Sigmoid colon (tissue), 7 donors: ENCODE measurements at regions of chr2 and their contacts with region 1.

Region 1: DNA sequence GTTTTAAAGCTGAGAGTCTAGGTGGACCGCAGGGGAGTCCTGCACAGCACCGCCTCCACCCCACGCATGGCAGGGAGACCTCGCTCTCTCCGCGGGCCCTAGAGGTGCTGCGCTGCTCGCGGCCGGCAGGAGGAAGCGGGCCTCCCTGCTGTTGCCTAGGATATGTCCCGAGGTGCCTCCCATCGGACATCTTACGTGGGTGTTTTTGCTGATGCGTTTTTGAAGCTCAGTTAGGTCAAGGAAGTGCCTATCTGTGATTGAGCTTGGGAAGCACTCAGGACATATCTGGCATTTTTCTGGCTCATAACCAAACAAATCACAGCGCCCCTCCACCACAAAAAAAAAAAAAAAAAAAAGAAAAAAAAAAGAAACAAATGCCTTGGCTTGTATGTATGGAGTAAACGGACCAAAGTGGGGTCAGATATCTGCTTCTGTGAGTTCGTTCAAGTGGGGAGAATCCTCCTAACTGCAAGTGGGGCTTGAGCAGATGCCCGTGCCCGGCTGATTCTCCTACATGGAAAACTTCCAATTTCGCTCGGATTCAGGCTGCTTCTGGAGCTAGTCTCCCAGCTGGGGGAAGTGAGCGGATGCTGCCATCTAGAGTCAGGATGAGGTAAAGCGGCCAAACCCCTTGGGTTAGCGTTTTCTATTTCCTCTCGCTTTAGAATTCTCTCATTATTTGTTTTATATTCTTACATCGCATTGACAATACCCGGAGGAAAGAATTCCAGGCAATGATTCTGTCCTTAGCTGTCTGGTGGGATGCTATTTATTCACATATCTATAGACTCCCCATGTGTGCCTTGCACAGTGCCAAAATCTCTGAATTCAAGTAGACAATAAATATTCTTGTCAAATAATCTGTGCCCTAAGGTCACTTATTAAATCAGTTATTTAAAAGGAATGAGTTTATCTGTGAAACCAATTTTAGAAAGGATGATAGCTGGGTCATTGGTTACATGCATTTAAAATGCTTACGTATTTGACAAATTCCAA is 95.3 kb downstream of the CD8B2 start:
- DNase-seq: peak; percentile 91
- H3K4me3 ChIP-seq: peak overlapping the region in 3 of 4 donors; percentile 25 to 39 (median 30)
- H3K27ac ChIP-seq: peak overlapping the region in 1 of 4 donors; percentile 47
- H3K4me1 ChIP-seq: peaks cover 0 to 5% (median 4%) of the 10 kb centered on the region in 4 donors
- H3K27me3 ChIP-seq: peaks cover 0 to 13% (median 6%) of the 10 kb centered on the region in 3 donors
- CTCF ChIP-seq: peak; percentile 34 to 71 (median 68)
- EP300 ChIP-seq: no peak
- POLR2A ChIP-seq: no peak

Region 2: DNA sequence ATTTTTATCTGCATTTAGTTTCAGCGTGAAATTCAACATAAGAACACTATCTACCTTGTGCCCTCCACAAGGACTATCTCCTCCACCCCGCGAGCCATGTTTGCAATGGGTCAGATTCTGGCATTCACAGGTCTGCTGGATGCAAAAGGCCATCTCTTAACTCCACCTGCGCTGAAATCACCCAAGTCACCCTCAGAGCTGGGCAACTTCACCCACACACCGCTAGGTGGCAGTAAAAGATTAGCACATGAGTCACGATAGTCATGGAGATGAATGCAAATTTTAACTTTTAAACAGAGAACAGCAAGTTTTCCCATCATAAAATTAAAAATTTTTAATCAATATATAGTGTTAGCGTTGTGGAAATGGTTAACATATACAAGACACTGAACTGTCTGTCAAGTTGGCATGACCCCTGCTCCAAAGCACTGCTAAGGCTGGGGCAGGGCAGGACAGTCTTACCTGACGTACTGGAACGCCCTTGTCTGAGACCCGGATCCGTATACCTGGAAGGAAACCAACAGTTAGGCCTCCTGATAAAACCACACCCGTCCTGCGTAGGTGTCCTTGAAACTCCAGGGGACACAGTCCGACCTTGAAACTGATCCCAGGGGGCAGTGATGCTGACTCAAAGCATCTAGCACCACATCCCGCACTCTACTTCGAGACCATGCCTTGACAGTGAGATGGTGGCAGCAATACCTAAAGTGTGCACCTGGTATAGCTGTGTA is 477.9 kb before region 1 on chr2:
- intact Hi-C with region 1: loop called (anchors 5 kb)
- DNase-seq: no peak
- H3K4me3 ChIP-seq: no peak overlapping the region
- H3K27ac ChIP-seq: no peak overlapping the region
- H3K4me1 ChIP-seq: peaks cover 0 to 25% (median 8%) of the 10 kb centered on the region in 4 donors
- H3K27me3 ChIP-seq: no peaks in the 10 kb centered on the region
- CTCF ChIP-seq: peak; percentile 86 to 95 (median 92)
- EP300 ChIP-seq: no peak
- POLR2A ChIP-seq: no peak

Region 3: DNA sequence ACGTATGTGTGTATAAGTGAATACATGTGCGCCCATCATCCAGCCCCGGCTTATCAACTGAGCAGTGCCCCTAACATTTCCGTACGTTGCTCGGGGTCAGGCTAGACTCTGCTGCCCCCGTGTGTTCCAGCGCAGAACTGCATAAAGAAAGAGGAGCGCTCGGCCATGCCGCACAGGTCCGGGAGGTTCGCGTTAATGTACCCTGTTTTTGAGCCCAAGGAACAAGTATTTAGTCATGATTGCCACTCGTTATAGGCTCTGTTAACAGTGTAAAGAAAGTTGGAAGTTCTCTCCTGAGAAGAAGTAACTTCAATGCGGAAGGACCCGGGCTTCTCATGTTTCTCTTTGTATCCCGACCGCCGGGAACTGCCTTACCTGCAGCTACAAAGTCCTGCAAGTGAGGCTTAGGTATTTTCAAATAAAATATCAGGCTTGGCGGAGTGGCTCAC is 39.6 kb before region 1 on chr2:
- intact Hi-C with region 1: loop called (anchors 2 kb)
- DNase-seq: peak; percentile 80
- H3K4me3 ChIP-seq: peak overlapping the region in 2 of 4 donors; percentile 9 to 27
- H3K27ac ChIP-seq: no peak overlapping the region
- H3K4me1 ChIP-seq: peaks cover 0 to 17% (median 8%) of the 10 kb centered on the region in 4 donors
- H3K27me3 ChIP-seq: peaks cover 0 to 7% (median 0%) of the 10 kb centered on the region in 3 donors
- CTCF ChIP-seq: peak; percentile 63 to 94 (median 78)
- EP300 ChIP-seq: no peak
- POLR2A ChIP-seq: no peak

Region 4: GRCh38 chr2:106562268-106563186 is 19.9 kb before region 1 on chr2:
- intact Hi-C with region 1: loop called (anchors 1 kb)
- DNase-seq: peak; percentile 60
- H3K4me3 ChIP-seq: no peak overlapping the region
- H3K27ac ChIP-seq: peak overlapping the region; percentile 34 to 68 (median 62)
- H3K4me1 ChIP-seq: peaks cover 0 to 74% (median 58%) of the 10 kb centered on the region in 4 donors
- H3K27me3 ChIP-seq: no peaks in the 10 kb centered on the region
- CTCF ChIP-seq: no peak
- EP300 ChIP-seq: no peak
- POLR2A ChIP-seq: no peak